AG04449 (cell line): ENCODE measurements at regions of chr10 and their contacts with region 1.

Region 1: DNA sequence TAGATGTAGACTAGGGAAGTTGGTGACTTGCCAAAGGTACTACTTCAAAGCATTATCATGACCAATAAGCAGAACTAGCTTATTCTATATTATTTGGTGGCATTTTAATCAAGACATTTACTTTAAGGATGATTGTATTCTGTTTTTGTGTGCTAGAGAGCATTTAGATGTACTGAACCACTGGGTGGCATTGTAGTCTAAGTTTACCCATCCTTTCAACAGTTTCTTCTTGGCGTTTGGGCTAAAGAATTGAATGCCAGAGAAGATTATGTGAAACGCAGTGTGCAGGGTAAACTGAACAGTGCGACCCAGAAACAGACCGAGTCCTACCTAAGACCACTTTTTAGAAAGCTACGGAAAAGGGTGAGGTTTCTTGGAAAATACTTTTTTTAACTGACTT is 26.8 kb downstream of the PRPF18 start:
- DNase-seq: no peak
- H3K4me3 ChIP-seq: no peak overlapping the region
- CTCF ChIP-seq: peak; percentile 23

Region 2: GRCh38 chr10:13404305-13404759 is 209.2 kb before region 1 on chr10:
- CTCF ChIA-PET with region 1: no interaction called
- POLR2A ChIA-PET with region 1: no interaction called
- DNase-seq: no peak
- H3K4me3 ChIP-seq: no peak overlapping the region
- CTCF ChIP-seq: no peak

Region 3: GRCh38 chr10:13631594-13631993 is 18.1 kb after region 1 on chr10:
- CTCF ChIA-PET with region 1: interaction called, 11 read pairs
- POLR2A ChIA-PET with region 1: no interaction called
- DNase-seq: no peak
- H3K4me3 ChIP-seq: no peak overlapping the region
- CTCF ChIP-seq: no peak

Region 4: DNA sequence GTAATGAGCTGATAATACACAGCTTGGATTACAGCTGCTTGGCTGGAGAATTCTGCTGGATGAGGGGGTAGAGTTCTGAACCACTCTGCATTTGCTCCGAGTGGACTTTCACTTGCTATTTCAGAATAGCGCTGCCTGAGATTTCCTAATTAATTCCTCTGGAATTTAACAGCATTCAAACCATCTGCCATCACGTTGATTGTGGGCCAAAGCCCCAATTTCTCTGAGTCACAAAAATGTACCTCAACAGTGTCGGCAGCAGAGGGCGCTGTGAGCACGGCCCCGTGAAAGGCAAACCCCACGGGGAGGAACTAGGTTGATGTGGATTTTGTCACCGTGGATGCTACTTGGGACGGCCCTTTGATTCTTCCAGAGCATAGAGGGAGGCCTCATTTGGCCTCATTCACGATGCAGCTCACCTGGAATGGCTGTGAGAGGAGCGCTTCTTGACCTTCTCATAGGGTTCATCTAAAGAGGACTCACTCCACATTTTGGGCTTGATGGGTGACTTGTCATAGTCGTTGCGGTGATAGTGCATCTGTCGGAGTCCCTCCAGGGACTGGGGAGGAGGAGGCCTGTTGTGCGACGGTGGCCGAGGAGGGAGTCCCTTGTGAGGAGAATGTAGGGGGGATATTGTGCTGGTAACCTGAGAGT is 46.5 kb after region 1 on chr10:
- CTCF ChIA-PET with region 1: interaction called, 12 read pairs
- POLR2A ChIA-PET with region 1: no interaction called
- DNase-seq: no peak
- H3K4me3 ChIP-seq: no peak overlapping the region
- CTCF ChIP-seq: peak; percentile 86

Region 5: GRCh38 chr10:13769955-13770354 is 156.4 kb after region 1 on chr10:
- CTCF ChIA-PET with region 1: interaction called, 55 read pairs
- POLR2A ChIA-PET with region 1: no interaction called
- DNase-seq: no peak
- H3K4me3 ChIP-seq: no peak overlapping the region
- CTCF ChIP-seq: no peak

Region 6: DNA sequence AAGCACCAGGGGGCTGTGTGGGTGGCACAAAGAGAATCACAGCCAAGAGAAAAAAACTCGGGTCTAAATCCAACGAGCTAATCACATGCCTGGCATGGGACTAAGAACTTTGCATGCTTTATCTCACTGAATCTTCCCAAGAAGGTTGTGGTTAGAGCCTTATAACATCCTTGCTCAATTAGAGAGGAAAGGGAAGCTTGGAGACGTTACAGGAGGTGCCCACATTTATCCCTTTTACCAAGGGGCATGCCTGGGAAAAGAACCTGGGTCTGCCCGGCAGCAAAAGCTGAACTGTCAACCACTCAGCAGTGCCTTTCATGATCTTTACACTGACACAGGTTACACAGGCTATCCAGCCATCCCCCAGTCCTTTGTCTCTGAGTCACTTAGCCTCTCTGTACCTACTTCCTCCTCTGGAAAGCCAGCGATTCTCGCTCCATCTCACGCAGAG is 163.4 kb after region 1 on chr10:
- CTCF ChIA-PET with region 1: interaction called, 55 read pairs
- POLR2A ChIA-PET with region 1: no interaction called
- DNase-seq: no peak
- H3K4me3 ChIP-seq: no peak overlapping the region
- CTCF ChIP-seq: no peak

Region 7: DNA sequence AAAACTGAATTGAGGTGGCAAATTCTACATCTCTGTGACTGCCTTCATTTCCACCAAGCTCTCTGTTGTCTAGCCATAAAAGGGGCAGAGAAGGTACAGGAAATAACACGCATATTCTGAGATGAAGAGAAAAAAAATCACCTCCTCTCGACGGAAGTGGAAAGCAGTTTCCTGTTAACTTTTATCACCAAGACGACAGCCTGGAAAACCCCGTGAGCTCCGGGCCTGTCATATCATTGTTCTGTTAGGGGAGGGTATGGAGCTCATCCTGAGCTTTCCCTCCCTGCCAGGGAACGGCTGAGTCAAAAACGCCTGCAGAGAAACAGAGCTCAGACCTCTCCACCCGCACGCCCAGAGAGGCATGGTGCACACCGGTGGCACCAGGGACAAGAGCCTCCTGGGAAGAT is 173.5 kb after region 1 on chr10:
- CTCF ChIA-PET with region 1: interaction called, 26 read pairs
- POLR2A ChIA-PET with region 1: no interaction called
- DNase-seq: no peak
- H3K4me3 ChIP-seq: no peak overlapping the region
- CTCF ChIP-seq: no peak

Region 8: DNA sequence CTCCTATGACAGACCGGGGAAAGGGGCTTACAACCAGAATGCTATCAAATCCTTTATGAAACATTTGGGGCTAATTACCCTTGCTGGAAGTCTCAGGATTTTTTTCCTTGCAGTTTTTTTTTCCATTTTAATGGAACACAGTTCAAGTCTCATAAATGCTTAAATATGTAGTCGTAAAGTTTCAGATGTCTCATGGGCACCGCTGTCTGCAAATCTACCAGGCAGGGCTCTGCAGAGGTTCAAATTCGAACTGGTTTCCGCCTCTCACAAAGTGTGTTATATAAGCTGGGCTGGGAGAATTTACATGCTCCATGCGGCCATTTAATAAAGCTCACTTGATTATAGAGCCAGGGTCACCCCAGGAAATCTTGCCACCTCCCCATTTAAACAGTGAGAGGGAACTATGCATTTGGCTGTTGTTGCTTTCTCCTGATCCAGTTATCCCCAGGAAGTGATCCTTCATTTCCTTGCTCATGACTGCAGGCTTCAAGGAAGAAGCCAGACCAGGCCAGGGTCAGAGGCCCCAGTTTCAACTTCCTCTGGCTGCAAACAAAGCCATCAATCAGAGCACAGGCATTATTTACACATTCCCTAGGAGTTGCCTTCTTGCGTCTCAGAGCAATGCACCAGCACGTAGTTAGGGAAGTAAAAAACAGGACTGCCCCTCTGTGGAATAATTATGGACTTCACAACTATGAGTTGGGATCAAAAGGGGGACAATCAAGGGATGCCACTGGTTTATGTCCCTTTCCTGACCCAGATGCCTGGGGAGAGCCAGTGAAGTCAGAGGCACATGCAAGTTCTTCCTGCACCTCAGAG is 332.1 kb after region 1 on chr10:
- CTCF ChIA-PET with region 1: no interaction called
- POLR2A ChIA-PET with region 1: no interaction called
- DNase-seq: no peak
- H3K4me3 ChIP-seq: no peak overlapping the region
- CTCF ChIP-seq: no peak

Region 9: DNA sequence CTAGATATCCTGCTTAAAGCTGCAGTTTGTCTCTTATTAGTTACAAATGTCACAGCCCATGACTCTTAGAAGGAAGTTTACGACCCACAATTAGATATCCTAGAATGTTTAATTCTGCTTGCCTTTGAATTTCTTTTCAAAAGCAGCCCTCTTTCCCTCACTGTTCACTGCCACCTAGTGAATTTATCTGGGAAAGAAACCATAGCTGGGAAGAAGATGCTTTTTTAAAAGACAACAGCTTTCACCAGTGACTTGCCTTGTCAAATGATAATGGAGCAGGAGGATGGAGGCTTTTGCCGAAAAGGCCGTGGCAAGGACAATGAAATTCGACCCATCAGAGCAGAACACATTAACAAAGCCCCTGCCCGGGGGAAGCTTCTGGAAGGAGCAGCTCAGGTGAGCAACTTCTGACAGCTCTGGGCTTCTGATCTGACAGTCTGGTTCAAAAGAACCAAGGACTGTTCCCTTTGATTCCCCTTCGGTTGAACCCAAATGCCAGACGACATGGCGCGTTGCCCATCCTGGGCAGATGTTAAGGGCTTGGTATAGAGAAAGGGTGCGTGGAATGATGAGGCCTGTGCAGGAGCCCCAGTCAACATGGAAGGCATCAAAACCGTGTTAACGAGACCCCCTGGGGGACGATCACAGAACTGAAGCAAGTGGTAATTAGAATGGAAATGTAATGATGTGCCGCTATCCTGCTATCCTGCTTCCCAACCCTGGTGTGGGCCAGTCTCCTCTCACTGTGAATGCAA is 480.4 kb after region 1 on chr10:
- CTCF ChIA-PET with region 1: interaction called, 11 read pairs
- POLR2A ChIA-PET with region 1: no interaction called
- DNase-seq: no peak
- H3K4me3 ChIP-seq: no peak overlapping the region
- CTCF ChIP-seq: peak; percentile 38